ENCODE measurements at regions of chr5 and their contacts with region 1.

Region 1: DNA sequence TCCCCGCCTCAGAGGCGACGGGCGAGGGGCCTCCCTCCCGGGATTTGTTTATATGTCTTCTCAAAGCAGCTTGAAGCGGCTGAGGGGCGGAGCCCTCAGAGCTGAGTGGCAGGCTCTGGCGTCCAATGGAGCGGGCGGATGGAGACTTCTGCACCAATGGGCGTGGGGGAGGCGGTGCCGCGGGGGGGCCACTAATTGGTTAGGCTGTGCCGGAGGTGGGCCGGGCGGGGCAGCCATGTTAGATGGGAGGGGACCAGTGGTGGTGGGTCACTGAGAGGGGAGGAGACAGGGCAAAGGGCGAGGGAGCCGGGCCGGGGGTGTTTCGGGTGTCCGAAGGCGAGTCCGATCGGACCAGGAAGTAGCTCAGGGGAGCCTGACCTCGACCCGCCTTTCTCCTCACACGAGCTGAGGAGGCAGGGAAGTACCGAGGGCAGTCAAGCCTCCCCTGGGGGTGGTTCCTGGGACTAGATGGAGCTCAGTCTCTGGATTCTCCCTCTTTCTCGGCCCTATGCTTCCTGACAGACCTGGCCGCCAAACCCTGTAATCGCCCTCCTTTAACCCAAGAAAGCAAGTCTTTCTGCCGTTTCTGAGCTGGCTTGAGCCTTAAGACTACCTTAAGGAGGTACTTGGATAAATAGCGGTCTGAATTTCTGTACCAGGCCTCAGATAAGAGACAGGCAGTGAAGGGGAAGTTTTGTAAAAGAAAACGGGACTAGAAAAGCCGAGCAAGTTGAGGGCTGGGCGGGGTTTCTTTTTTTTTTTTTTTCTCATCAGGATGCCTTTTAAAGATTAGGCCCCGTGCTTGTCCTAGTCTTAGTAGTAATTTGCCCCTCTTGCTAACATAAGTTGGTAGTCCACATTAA is 1.1 kb downstream of the CREBRF start:
- DNase-seq: peak; percentile 96 to 99 (median 98)
- ATAC-seq: peak; percentile 80
- H3K4me3 ChIP-seq: peak overlapping the region; percentile 69
- H3K4me3 Mint-ChIP-seq: peak overlapping the region; percentile 98
- H3K27ac ChIP-seq: peak overlapping the region; percentile 91 to 97
- H3K27ac Mint-ChIP-seq: peak overlapping the region; percentile 97
- H3K4me1 ChIP-seq: peaks cover 27% of the 10 kb centered on the region
- H3K4me1 Mint-ChIP-seq: peaks cover 70% of the 10 kb centered on the region
- H3K27me3 ChIP-seq: no peaks in the 10 kb centered on the region
- H3K27me3 Mint-ChIP-seq: no peaks in the 10 kb centered on the region
- CTCF ChIP-seq: no peak

Region 2: GRCh38 chr5:172496671-172497371 is 560.5 kb before region 1 on chr5:
- CTCF ChIA-PET with region 1: no interaction called
- POLR2A ChIA-PET with region 1: no interaction called
- intact Hi-C with region 1: no loop called
- DNase-seq: no peak
- ATAC-seq: no peak
- H3K4me3 ChIP-seq: no peak overlapping the region
- H3K4me3 Mint-ChIP-seq: no peak overlapping the region
- H3K27ac ChIP-seq: no peak overlapping the region
- H3K27ac Mint-ChIP-seq: no peak overlapping the region
- H3K4me1 ChIP-seq: no peaks in the 10 kb centered on the region
- H3K4me1 Mint-ChIP-seq: no peaks in the 10 kb centered on the region
- H3K27me3 ChIP-seq: no peaks in the 10 kb centered on the region
- H3K27me3 Mint-ChIP-seq: peaks cover 15% of the 10 kb centered on the region
- CTCF ChIP-seq: no peak

Region 3: GRCh38 chr5:173029499-173029921 is 27.8 kb before region 1 on chr5:
- CTCF ChIA-PET with region 1: no interaction called
- POLR2A ChIA-PET with region 1: interaction called, 37 read pairs
- intact Hi-C with region 1: no loop called
- DNase-seq: peak in 1 of 14 experiments; percentile 15
- ATAC-seq: peak; percentile 79
- H3K4me3 ChIP-seq: no peak overlapping the region
- H3K4me3 Mint-ChIP-seq: no peak overlapping the region
- H3K27ac ChIP-seq: peak overlapping the region; percentile 38 to 61
- H3K27ac Mint-ChIP-seq: no peak overlapping the region
- H3K4me1 ChIP-seq: peaks cover 32% of the 10 kb centered on the region
- H3K4me1 Mint-ChIP-seq: peaks cover 21% of the 10 kb centered on the region
- H3K27me3 ChIP-seq: no peaks in the 10 kb centered on the region
- H3K27me3 Mint-ChIP-seq: no peaks in the 10 kb centered on the region
- CTCF ChIP-seq: no peak

Region 4: GRCh38 chr5:173035904-173036707 is 21.2 kb before region 1 on chr5:
- CTCF ChIA-PET with region 1: interaction called, 5 read pairs
- POLR2A ChIA-PET with region 1: interaction called, 37 read pairs
- intact Hi-C with region 1: loop called in 1 of 2 experiments (anchors 2 kb)
- DNase-seq: peak in 3 of 14 experiments; percentile 27 to 48 (median 36)
- ATAC-seq: no peak
- H3K4me3 ChIP-seq: peak overlapping the region; percentile 45
- H3K4me3 Mint-ChIP-seq: peak overlapping the region; percentile 86
- H3K27ac ChIP-seq: peak overlapping the region; percentile 78 to 80
- H3K27ac Mint-ChIP-seq: peak overlapping the region; percentile 93
- H3K4me1 ChIP-seq: peaks cover 35% of the 10 kb centered on the region
- H3K4me1 Mint-ChIP-seq: peaks cover 66% of the 10 kb centered on the region
- H3K27me3 ChIP-seq: no peaks in the 10 kb centered on the region
- H3K27me3 Mint-ChIP-seq: no peaks in the 10 kb centered on the region
- CTCF ChIP-seq: no peak

Region 5: GRCh38 chr5:173094012-173094661 is 36.8 kb after region 1 on chr5:
- CTCF ChIA-PET with region 1: no interaction called
- POLR2A ChIA-PET with region 1: interaction called, 3 read pairs
- intact Hi-C with region 1: loop called in 1 of 2 experiments (anchors 5 kb)
- DNase-seq: no peak
- ATAC-seq: no peak
- H3K4me3 ChIP-seq: no peak overlapping the region
- H3K4me3 Mint-ChIP-seq: no peak overlapping the region
- H3K27ac ChIP-seq: no peak overlapping the region
- H3K27ac Mint-ChIP-seq: peak overlapping the region; percentile 74
- H3K4me1 ChIP-seq: peaks cover 8% of the 10 kb centered on the region
- H3K4me1 Mint-ChIP-seq: peaks cover 65% of the 10 kb centered on the region
- H3K27me3 ChIP-seq: no peaks in the 10 kb centered on the region
- H3K27me3 Mint-ChIP-seq: no peaks in the 10 kb centered on the region
- CTCF ChIP-seq: no peak

Region 6: GRCh38 chr5:173144200-173145176 is 87.2 kb after region 1 on chr5 and contains the start of gene BNIP1:
- CTCF ChIA-PET with region 1: interaction called, 5 read pairs
- POLR2A ChIA-PET with region 1: interaction called, 19 read pairs
- intact Hi-C with region 1: loop called (anchors 1 to 2 kb)
- DNase-seq: peak; percentile 90 to 99 (median 97)
- ATAC-seq: peak; percentile 93
- H3K4me3 ChIP-seq: peak within 1 kb of the TSS; percentile 90
- H3K4me3 Mint-ChIP-seq: peak within 1 kb of the TSS; percentile 98
- H3K27ac ChIP-seq: peak within 1 kb of the TSS; percentile 97 to 99
- H3K27ac Mint-ChIP-seq: peak within 1 kb of the TSS; percentile 100
- H3K4me1 ChIP-seq: peaks cover 8% of the 10 kb centered on the region
- H3K4me1 Mint-ChIP-seq: peaks cover 13% of the 10 kb centered on the region
- H3K27me3 ChIP-seq: no peaks in the 10 kb centered on the region
- H3K27me3 Mint-ChIP-seq: no peaks in the 10 kb centered on the region
- CTCF ChIP-seq: peak; percentile 90
- total RNA-seq, gene BNIP1: 22.5 to 24.4 TPM

Region 7: GRCh38 chr5:173163219-173163618 is 105.9 kb after region 1 on chr5:
- CTCF ChIA-PET with region 1: no interaction called
- POLR2A ChIA-PET with region 1: no interaction called
- intact Hi-C with region 1: no loop called
- DNase-seq: no peak
- ATAC-seq: no peak
- H3K4me3 ChIP-seq: no peak overlapping the region
- H3K4me3 Mint-ChIP-seq: no peak overlapping the region
- H3K27ac ChIP-seq: no peak overlapping the region
- H3K27ac Mint-ChIP-seq: no peak overlapping the region
- H3K4me1 ChIP-seq: no peaks in the 10 kb centered on the region
- H3K4me1 Mint-ChIP-seq: no peaks in the 10 kb centered on the region
- H3K27me3 ChIP-seq: no peaks in the 10 kb centered on the region
- H3K27me3 Mint-ChIP-seq: no peaks in the 10 kb centered on the region
- CTCF ChIP-seq: no peak

Region 8: DNA sequence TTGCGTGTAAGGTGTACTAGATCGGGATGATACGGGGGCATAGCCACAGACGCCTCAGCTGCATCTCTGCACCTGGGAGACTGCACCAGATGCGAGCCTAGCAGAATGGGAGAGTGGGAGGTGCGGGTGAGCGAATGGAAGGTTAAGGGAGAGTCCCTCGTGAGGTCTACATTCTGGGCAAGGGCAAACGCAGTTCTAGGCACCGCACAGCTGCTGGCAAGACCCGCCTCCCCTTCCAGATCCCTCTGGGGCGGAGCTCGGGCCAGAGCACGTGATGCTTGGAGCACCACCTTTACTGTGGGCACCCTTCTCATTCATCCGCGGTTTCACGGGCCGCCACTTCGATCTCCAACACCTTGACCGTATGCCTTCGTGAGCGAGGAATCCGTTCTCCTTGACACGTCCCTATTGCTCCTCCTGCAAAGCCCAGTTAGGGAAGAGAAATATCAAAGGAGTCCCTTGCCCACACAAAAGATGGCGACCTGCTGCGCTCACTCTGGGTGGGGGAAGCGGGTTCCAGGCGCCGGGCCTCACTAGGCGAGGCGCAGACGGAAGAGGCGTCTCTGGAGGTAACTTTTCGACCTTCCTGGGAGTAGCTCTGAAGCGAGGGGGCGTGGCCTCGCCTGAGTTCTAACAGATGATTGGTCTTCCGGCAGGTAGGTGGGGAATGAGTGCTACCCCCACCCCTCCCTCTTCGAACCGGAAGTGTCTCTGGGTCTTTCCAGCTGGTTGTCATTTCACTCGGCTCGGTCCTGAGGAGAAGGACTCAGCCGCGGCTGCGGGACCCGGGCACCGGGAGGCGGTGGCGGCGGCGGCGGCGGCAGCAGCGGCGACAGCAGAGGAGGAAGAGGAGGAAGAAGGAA is 830.5 kb after region 1 on chr5 and contains the start of gene CPEB4:
- CTCF ChIA-PET with region 1: no interaction called
- POLR2A ChIA-PET with region 1: no interaction called
- intact Hi-C with region 1: loop called in 1 of 2 experiments (anchors 10 kb)
- DNase-seq: peak; percentile 92 to 100 (median 96)
- ATAC-seq: peak; percentile 94
- H3K4me3 ChIP-seq: peak within 1 kb of the TSS; percentile 87
- H3K4me3 Mint-ChIP-seq: peak within 1 kb of the TSS; percentile 99
- H3K27ac ChIP-seq: peak within 1 kb of the TSS; percentile 77 to 89
- H3K27ac Mint-ChIP-seq: peak within 1 kb of the TSS; percentile 91
- H3K4me1 ChIP-seq: peaks cover 47% of the 10 kb centered on the region
- H3K4me1 Mint-ChIP-seq: peaks cover 90% of the 10 kb centered on the region
- H3K27me3 ChIP-seq: no peaks in the 10 kb centered on the region
- H3K27me3 Mint-ChIP-seq: no peaks in the 10 kb centered on the region
- CTCF ChIP-seq: no peak
- total RNA-seq, gene CPEB4: 18.3 to 19.2 TPM